Naive thymus-derived CD4-positive, alpha-beta T cell (primary cell): ENCODE measurements at regions of chr19 and their contacts with region 1.

Region 1: DNA sequence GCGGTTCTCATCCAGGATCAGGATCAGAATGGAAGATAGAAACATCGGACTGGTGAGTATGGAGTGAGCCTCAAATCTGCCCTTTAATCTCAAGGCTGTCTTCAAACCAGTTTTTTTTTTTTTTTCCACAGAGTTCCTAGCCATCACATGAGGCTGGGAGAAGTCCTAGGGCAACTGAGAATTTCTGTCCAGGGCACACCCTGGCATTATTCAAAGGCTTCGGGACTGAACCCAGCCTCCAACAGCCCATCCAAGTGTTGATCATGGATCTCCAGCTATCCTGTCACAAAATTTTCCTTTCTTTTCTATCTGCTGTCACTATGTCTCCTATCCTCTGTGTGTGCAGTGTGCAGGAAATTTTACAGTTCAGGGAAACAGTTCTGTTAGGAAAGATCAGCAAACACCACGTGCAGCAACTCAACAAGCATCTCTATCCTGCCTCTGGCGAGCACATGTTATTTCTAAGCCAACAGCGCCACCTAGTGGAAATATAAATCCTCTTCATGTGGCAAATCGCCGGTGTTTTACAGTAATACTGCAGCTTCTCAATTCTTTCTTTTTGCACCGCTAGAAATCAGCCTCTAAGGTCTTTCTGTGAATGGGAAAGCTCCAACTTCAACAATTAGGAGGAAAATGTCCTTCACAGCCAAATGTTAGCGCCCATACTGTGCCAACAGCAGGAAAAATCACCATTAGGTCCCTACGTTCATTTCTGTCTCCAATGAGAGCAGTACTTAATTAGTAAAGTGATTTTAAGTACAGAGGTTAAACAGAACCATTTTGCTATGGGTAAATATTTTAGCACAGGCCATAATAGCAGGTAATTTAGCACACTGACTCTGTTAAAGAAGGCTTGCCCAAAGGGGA is 21.4 kb upstream of the ZNF181 start:
- DNase-seq: peak in 8 of 9 donors; percentile 41 to 79 (median 70)
- ATAC-seq: peak; percentile 67
- H3K4me3 ChIP-seq: no peak overlapping the region
- H3K4me3 Mint-ChIP-seq: no peak overlapping the region
- H3K27ac ChIP-seq: no peak overlapping the region
- H3K27ac Mint-ChIP-seq: no peak overlapping the region
- H3K4me1 ChIP-seq: no peaks in the 10 kb centered on the region
- H3K4me1 Mint-ChIP-seq: peaks cover 0 to 6% (median 2%) of the 10 kb centered on the region in 7 donors
- H3K27me3 ChIP-seq: no peaks in the 10 kb centered on the region
- H3K27me3 Mint-ChIP-seq: peaks cover 3 to 50% (median 18%) of the 10 kb centered on the region in 5 donors

Region 2: GRCh38 chr19:34501339-34502320 is 211.0 kb before region 1 on chr19:
- CTCF ChIA-PET with region 1: no interaction called
- POLR2A ChIA-PET with region 1: no interaction called
- intact Hi-C with region 1: loop called (anchors 1 kb)
- DNase-seq: peak; percentile 57 to 93 (median 79)
- ATAC-seq: peak; percentile 82
- H3K4me3 ChIP-seq: no peak overlapping the region
- H3K4me3 Mint-ChIP-seq: peak overlapping the region in 7 of 10 donors; percentile 8 to 65 (median 16)
- H3K27ac ChIP-seq: no peak overlapping the region
- H3K27ac Mint-ChIP-seq: peak overlapping the region in 1 of 9 donors; percentile 48
- H3K4me1 ChIP-seq: peaks cover 4 to 6% of the 10 kb centered on the region in 2 donors
- H3K4me1 Mint-ChIP-seq: peaks cover 0 to 6% (median 4%) of the 10 kb centered on the region in 7 donors
- H3K27me3 ChIP-seq: no peaks in the 10 kb centered on the region
- H3K27me3 Mint-ChIP-seq: peaks cover 0 to 31% (median 8%) of the 10 kb centered on the region in 5 donors

Region 3: GRCh38 chr19:34692549-34692948 is 20.1 kb before region 1 on chr19:
- CTCF ChIA-PET with region 1: no interaction called
- POLR2A ChIA-PET with region 1: no interaction called
- intact Hi-C with region 1: no loop called
- DNase-seq: no peak
- ATAC-seq: no peak
- H3K4me3 ChIP-seq: no peak overlapping the region
- H3K4me3 Mint-ChIP-seq: no peak overlapping the region
- H3K27ac ChIP-seq: no peak overlapping the region
- H3K27ac Mint-ChIP-seq: no peak overlapping the region
- H3K4me1 ChIP-seq: no peaks in the 10 kb centered on the region
- H3K4me1 Mint-ChIP-seq: no peaks in the 10 kb centered on the region
- H3K27me3 ChIP-seq: no peaks in the 10 kb centered on the region
- H3K27me3 Mint-ChIP-seq: peaks cover 0 to 54% (median 33%) of the 10 kb centered on the region in 5 donors

Region 4: DNA sequence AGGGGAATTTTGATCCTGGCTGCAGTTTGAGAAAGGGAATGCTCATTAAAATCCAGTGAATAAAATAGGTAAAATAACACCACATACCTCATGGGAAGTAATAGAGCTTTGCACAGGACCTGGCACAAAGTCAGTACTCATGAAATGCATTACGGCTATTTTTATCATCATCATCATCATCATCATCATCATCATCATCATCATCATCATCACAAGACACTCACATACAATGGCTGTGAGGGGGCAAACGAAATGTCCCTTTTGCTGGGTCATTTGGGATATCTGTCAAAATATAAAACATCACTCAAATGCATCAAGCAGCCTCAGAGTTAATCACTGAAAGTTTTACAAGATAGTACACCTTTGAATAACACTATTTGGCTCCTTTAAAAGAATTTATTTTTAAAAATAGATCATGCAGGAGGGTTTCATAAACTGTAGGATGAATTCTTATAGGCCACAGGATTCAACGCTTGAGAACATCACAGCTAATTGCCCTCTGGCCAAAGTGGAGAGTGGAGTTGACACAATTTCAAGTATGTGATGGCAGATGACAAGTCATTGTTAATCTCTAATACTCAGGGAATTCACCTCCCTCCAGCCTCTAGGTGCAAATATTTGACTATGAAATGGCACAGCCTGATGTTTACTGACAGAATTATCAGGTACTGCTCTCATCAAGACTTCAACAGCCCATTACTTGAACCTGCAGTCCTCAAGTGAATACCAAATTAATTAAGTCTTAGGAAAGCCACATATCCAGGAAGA is 74.6 kb after region 1 on chr19:
- CTCF ChIA-PET with region 1: no interaction called
- POLR2A ChIA-PET with region 1: no interaction called
- intact Hi-C with region 1: no loop called
- DNase-seq: no peak
- ATAC-seq: no peak
- H3K4me3 ChIP-seq: no peak overlapping the region
- H3K4me3 Mint-ChIP-seq: no peak overlapping the region
- H3K27ac ChIP-seq: no peak overlapping the region
- H3K27ac Mint-ChIP-seq: no peak overlapping the region
- H3K4me1 ChIP-seq: no peaks in the 10 kb centered on the region
- H3K4me1 Mint-ChIP-seq: no peaks in the 10 kb centered on the region
- H3K27me3 ChIP-seq: no peaks in the 10 kb centered on the region
- H3K27me3 Mint-ChIP-seq: no peaks in the 10 kb centered on the region